IMR-90 (cell line): ENCODE measurements at regions of chr1 and their contacts with region 1.

Region 1: DNA sequence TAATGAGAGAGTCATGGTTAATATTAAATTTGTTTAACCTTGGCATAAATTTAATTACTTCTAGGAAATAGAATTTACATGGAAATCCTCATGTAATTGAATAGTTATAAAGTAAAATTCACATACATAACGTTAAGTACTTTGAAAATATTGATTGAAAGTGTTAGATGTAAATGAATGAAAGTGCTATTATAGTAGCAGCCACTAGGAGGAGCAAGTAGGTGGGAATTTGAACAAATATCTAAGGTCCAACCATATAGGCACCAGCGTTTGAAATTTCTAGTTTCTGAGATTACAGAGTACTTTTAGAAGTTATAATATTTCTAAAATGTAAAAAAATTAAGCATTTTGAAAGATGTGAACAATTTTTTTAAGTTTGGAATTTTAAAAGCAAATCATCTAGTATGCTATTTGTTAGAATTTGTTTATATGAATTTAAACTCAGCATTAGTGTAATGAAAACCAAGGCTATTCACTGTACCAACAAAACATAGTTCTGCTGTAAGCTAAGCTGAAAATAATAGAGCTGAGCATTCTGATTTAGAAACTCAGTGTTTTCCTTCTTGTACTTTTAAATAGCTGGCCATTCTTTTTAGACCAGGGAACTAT is 3.3 kb downstream of the B3GALT2 start:
- DNase-seq: peak; percentile 71
- ATAC-seq: peak; percentile 74
- H3K4me3 ChIP-seq: peak overlapping the region; percentile 32; the same call in 1 of the 2 replicates
- H3K27ac ChIP-seq: peak overlapping the region; percentile 52; the same call in 1 of the 2 replicates
- H3K4me1 ChIP-seq: peaks cover 6% of the 10 kb centered on the region; the same call in 1 of the 2 replicates
- H3K27me3 ChIP-seq: no peaks in the 10 kb centered on the region
- CTCF ChIP-seq: peak; percentile 77
- POLR2A ChIP-seq: no peak
- RAD21 ChIP-seq: peak; percentile 79

Region 2: DNA sequence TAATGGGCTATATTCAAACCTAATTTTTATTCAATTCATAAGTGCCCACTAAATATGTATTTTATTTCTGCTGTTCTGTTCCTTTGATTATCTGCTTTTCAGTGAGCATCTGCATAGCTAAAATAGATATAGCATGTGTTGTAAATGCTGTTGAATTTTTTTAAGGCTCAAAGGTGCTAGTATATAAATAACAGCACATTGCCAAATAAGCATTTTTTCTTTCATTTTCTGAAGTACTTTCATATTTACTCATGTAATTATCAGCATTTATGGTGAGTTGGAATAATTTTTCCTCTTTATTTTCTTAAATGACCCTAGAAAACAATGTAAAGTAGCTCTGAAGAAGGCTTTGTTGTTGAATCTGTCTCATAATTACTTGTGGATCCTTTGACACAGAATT is 72.9 kb after region 1 on chr1:
- CTCF ChIA-PET with region 1: no interaction called
- POLR2A ChIA-PET with region 1: no interaction called
- dilution Hi-C with region 1: no loop called
- in situ Hi-C with region 1: no loop called
- intact Hi-C with region 1: no loop called
- DNase-seq: no peak
- ATAC-seq: no peak
- H3K4me3 ChIP-seq: no peak overlapping the region
- H3K27ac ChIP-seq: no peak overlapping the region
- H3K4me1 ChIP-seq: peaks cover 3% of the 10 kb centered on the region
- H3K27me3 ChIP-seq: no peaks in the 10 kb centered on the region
- CTCF ChIP-seq: no peak
- POLR2A ChIP-seq: no peak
- RAD21 ChIP-seq: no peak

Region 3: DNA sequence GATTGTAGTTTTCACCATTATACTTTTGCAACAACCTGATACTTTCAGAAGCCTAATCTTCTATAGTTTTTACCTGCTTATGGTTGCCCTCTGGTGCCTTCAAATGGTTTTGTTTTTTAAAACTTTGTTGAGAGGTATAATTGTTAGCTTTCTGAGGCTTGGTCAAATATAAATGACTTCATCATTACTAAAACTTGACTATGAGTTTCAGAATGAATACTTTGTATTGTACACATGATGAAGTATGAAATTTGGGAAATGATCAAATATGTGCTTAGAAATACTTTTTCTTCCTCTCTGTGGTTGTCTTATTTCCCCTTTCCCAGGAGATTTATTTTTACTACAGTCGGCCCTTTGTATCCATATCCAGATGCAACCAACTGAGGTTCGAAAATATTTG is 155.1 kb after region 1 on chr1:
- CTCF ChIA-PET with region 1: interaction called, 5 read pairs
- POLR2A ChIA-PET with region 1: interaction called, 4 read pairs
- dilution Hi-C with region 1: no loop called
- in situ Hi-C with region 1: no loop called
- intact Hi-C with region 1: loop called (anchors 2 kb)
- DNase-seq: peak; percentile 64
- ATAC-seq: peak; percentile 21
- H3K4me3 ChIP-seq: no peak overlapping the region
- H3K27ac ChIP-seq: peak overlapping the region; percentile 4; the same call in 1 of the 2 replicates
- H3K4me1 ChIP-seq: peaks cover 11% of the 10 kb centered on the region
- H3K27me3 ChIP-seq: no peaks in the 10 kb centered on the region
- CTCF ChIP-seq: peak; percentile 28; the same call in 1 of the 2 replicates
- POLR2A ChIP-seq: no peak
- RAD21 ChIP-seq: peak; percentile 34

Region 4: GRCh38 chr1:193558491-193559028 is 375.4 kb after region 1 on chr1:
- CTCF ChIA-PET with region 1: no interaction called
- POLR2A ChIA-PET with region 1: no interaction called
- dilution Hi-C with region 1: no loop called
- in situ Hi-C with region 1: loop called (anchors 25 kb)
- intact Hi-C with region 1: loop called (anchors 10 kb)
- DNase-seq: peak; percentile 91
- ATAC-seq: peak; percentile 90
- H3K4me3 ChIP-seq: no peak overlapping the region
- H3K27ac ChIP-seq: no peak overlapping the region
- H3K4me1 ChIP-seq: peaks cover 2% of the 10 kb centered on the region; the same call in 1 of the 2 replicates
- H3K27me3 ChIP-seq: no peaks in the 10 kb centered on the region
- CTCF ChIP-seq: no peak
- POLR2A ChIP-seq: no peak
- RAD21 ChIP-seq: no peak

Region 5: GRCh38 chr1:194043984-194044755 is 861.0 kb after region 1 on chr1:
- CTCF ChIA-PET with region 1: no interaction called
- POLR2A ChIA-PET with region 1: no interaction called
- dilution Hi-C with region 1: no loop called
- in situ Hi-C with region 1: no loop called
- intact Hi-C with region 1: loop called (anchors 10 kb)
- DNase-seq: peak; percentile 72
- ATAC-seq: peak; percentile 48; the same call in 1 of the 2 replicates
- H3K4me3 ChIP-seq: no peak overlapping the region
- H3K27ac ChIP-seq: no peak overlapping the region
- H3K4me1 ChIP-seq: peaks cover 8% of the 10 kb centered on the region
- H3K27me3 ChIP-seq: no peaks in the 10 kb centered on the region
- CTCF ChIP-seq: no peak
- POLR2A ChIP-seq: no peak
- RAD21 ChIP-seq: no peak

Region 6: DNA sequence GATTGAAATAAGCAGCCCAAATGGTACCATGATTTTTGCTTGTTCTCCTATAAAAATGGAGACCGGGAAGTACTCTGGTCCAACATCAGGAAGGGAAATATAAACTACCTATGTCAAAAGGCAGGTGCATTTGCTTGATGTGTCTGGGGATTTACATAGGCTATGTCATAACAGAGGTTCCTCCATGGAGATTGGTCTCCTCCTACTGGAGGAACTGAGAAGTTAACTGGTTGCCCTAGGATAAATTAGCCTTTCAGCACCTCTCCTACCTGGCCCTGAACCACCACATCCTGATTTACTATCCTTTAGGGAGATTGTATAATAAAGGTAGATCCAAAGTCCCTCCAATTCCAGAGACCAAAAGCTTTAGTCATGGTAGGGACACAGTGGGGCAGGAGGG is 1112.6 kb after region 1 on chr1:
- CTCF ChIA-PET with region 1: no interaction called
- POLR2A ChIA-PET with region 1: no interaction called
- dilution Hi-C with region 1: no loop called
- in situ Hi-C with region 1: loop called (anchors 25 kb)
- intact Hi-C with region 1: loop called (anchors 1 kb)
- DNase-seq: peak; percentile 44
- ATAC-seq: peak; percentile 61
- H3K4me3 ChIP-seq: no peak overlapping the region
- H3K27ac ChIP-seq: no peak overlapping the region
- H3K4me1 ChIP-seq: no peaks in the 10 kb centered on the region
- H3K27me3 ChIP-seq: no peaks in the 10 kb centered on the region
- CTCF ChIP-seq: peak; percentile 57
- POLR2A ChIP-seq: no peak
- RAD21 ChIP-seq: peak; percentile 71